A549 (cell line): ENCODE measurements at regions of chr16 and their contacts with region 1.

Region 1: GRCh38 chr16:84062734-84063640 is 20.4 kb upstream of the SLC38A8 start:
- DNase-seq: peak; percentile 78 to 82
- ATAC-seq: peak; percentile 90 to 99
- H3K4me3 ChIP-seq: no peak overlapping the region
- H3K27ac ChIP-seq: no peak overlapping the region
- H3K4me1 ChIP-seq: no peaks in the 10 kb centered on the region
- CTCF ChIP-seq: peak; percentile 83
- EP300 ChIP-seq: no peak
- POLR2A ChIP-seq: no peak
- RAD21 ChIP-seq: peak; percentile 51 to 54; a peak in 4 of 5 replicates

Region 2: GRCh38 chr16:83926726-83927397 is 136.1 kb before region 1 on chr16:
- CTCF ChIA-PET with region 1: interaction called, 175 read pairs
- POLR2A ChIA-PET with region 1: no interaction called
- DNase-seq: peak; percentile 81 to 89
- ATAC-seq: peak; percentile 80 to 94
- H3K4me3 ChIP-seq: peak overlapping the region; percentile 42
- H3K27ac ChIP-seq: peak overlapping the region; percentile 75 to 86
- H3K4me1 ChIP-seq: peaks cover 6% of the 10 kb centered on the region
- CTCF ChIP-seq: peak; percentile 91
- EP300 ChIP-seq: no peak
- POLR2A ChIP-seq: no peak
- RAD21 ChIP-seq: peak; percentile 80 to 86

Region 3: DNA sequence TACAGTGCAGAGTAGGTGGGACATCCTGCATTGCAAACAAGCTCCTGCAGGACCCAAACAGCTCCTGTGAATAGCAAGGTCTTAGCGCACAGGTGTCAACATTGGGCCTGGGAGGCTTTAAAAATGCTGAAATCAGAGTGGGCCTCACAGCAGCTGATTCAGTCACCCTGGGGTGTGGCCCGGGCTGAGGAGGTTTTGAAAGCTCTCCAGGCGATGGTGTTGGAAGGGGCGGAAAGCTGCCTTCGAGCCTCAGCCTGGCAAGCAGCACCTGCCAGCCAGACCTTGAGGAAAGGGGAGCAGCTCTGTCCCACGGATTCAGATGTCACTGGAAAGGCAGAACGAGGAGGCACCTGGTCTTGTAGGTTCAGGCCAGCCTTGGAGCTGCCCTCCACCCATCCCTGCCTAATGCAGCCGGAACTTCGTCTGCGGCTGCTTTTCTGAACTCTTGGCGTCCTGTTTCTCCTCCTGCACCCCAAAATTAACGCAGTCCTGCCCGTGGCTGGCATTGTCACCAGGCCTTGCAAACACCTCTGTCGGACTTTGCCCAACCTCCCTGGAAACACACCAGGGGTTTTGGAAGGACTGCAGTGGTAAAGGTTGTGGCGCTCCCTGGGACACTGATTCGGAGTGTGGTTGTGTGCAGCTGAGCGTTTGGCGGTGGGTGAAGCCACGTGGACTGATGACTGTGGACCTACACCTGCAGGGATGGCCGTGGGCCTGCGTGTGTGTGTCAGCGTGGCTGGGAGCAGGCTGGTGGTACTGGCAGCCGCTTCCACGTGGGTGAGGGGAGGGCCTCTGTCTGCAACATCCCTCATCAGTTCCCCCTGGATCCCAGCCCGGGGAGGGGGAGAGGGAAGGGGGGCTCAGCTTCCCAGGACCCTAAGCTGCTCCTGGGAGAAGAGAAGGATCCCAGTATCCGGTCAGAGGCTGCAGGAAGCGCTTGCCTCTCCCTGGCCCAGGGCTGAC is 91.5 kb before region 1 on chr16:
- CTCF ChIA-PET with region 1: interaction called, 414 read pairs
- POLR2A ChIA-PET with region 1: no interaction called
- DNase-seq: no peak
- ATAC-seq: no peak
- H3K4me3 ChIP-seq: no peak overlapping the region
- H3K27ac ChIP-seq: no peak overlapping the region
- H3K4me1 ChIP-seq: no peaks in the 10 kb centered on the region
- CTCF ChIP-seq: no peak
- EP300 ChIP-seq: no peak
- POLR2A ChIP-seq: no peak
- RAD21 ChIP-seq: no peak

Region 4: GRCh38 chr16:84044118-84044488 is 18.9 kb before region 1 on chr16:
- CTCF ChIA-PET with region 1: interaction called, 28 read pairs
- POLR2A ChIA-PET with region 1: no interaction called
- DNase-seq: peak; percentile 42 to 53
- ATAC-seq: peak; percentile 61 to 84; a peak in 4 of 6 replicates
- H3K4me3 ChIP-seq: no peak overlapping the region
- H3K27ac ChIP-seq: no peak overlapping the region
- H3K4me1 ChIP-seq: no peaks in the 10 kb centered on the region
- CTCF ChIP-seq: peak; percentile 46; the same call in 2 of the 3 replicates
- EP300 ChIP-seq: no peak
- POLR2A ChIP-seq: no peak
- RAD21 ChIP-seq: peak; percentile 36 to 55; a peak in 4 of 5 replicates

Region 5: GRCh38 chr16:84084570-84085270 is 21.7 kb after region 1 on chr16:
- CTCF ChIA-PET with region 1: interaction called, 48 read pairs
- POLR2A ChIA-PET with region 1: no interaction called
- DNase-seq: peak; percentile 79 to 89
- ATAC-seq: peak; percentile 91 to 96
- H3K4me3 ChIP-seq: no peak overlapping the region
- H3K27ac ChIP-seq: no peak overlapping the region
- H3K4me1 ChIP-seq: no peaks in the 10 kb centered on the region
- CTCF ChIP-seq: peak; percentile 80
- EP300 ChIP-seq: no peak
- POLR2A ChIP-seq: no peak
- RAD21 ChIP-seq: peak; percentile 70 to 73